PC-9 (cell line): ENCODE measurements at regions of chr1 and their contacts with region 1.

Region 1: GRCh38 chr1:1020000-1020404 is at the start of gene AGRN:
- DNase-seq: peak in 1 of 2 experiments; percentile 57
- H3K4me3 ChIP-seq: peak within 1 kb of the TSS; percentile 80
- H3K27ac ChIP-seq: peak within 1 kb of the TSS; percentile 76
- H3K4me1 ChIP-seq: peaks cover 32% of the 10 kb centered on the region
- H3K27me3 ChIP-seq: no peaks in the 10 kb centered on the region
- CTCF ChIP-seq: no peak
- total RNA-seq, gene AGRN: 278 and 381 TPM in 2 replicates

Region 2: GRCh38 chr1:1033009-1033587 is 13.1 kb after region 1 on chr1:
- CTCF ChIA-PET with region 1: no interaction called
- POLR2A ChIA-PET with region 1: no interaction called
- intact Hi-C with region 1: no loop called
- DNase-seq: no peak
- H3K4me3 ChIP-seq: no peak overlapping the region
- H3K27ac ChIP-seq: no peak overlapping the region
- H3K4me1 ChIP-seq: no peaks in the 10 kb centered on the region
- H3K27me3 ChIP-seq: no peaks in the 10 kb centered on the region
- CTCF ChIP-seq: peak; percentile 25; the same call in 1 of the 2 replicates

Region 3: GRCh38 chr1:1307908-1308755 is 288.1 kb after region 1 on chr1 and contains the starts of genes ACAP3 and PUSL1:
- CTCF ChIA-PET with region 1: no interaction called
- POLR2A ChIA-PET with region 1: no interaction called
- intact Hi-C with region 1: loop called (anchors 1 kb)
- DNase-seq: peak; percentile 72 to 89
- H3K4me3 ChIP-seq: peak within 1 kb of the TSS; percentile 84
- H3K27ac ChIP-seq: peak within 1 kb of the TSS; percentile 41
- H3K4me1 ChIP-seq: peaks cover 36% of the 10 kb centered on the region
- H3K27me3 ChIP-seq: no peaks in the 10 kb centered on the region
- CTCF ChIP-seq: no peak
- total RNA-seq, gene ACAP3: 53.5 and 54.8 TPM in 2 replicates
- total RNA-seq, gene PUSL1: 18.0 and 18.9 TPM in 2 replicates

Region 4: DNA sequence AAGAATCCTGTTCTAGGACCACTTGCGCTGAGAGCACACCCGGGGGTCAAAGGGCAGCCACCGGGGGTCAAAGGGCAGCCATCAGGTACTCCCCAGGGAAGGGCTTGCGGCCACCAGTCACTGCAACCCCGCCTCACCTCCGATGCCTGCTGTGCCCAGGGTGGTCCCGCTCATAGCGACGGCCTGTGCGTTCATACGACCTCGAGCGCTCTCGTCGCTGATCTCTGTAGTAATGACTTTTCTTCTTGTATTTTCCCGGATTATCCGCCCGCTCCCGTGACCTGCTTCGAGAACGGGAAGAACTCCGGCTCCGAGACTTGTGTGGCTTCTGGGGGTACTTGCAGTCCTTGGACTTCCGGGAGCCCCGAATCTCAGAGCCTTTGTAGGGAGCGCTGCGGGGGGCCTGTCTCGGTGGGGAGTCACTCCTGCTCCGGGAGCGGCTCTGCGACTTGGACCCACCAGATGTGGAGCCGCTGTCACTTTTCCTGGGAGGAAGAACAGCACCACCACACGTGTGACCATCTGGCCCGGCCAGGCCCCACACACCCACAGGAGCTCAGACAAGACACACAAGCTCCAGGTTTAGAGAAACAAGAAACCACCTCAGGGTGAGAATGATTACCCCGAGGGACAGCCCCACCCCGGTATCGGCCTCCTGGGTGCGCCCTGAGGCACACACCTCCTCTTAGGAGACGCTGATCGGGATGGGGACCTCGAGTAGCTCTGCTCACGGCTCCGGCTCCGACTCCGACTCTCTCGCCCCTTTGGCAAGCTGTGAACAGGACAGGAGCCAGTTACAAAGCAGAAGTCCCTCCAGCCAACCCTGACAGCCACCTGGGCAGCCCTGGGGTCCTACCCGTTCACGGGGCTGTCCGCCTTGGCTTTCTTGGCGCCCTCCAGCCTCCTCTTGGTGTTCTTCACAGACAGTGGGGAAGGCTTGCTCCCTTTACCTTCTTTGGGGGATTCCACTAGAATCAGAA is 367.4 kb after region 1 on chr1:
- CTCF ChIA-PET with region 1: no interaction called
- POLR2A ChIA-PET with region 1: no interaction called
- intact Hi-C with region 1: no loop called
- DNase-seq: no peak
- H3K4me3 ChIP-seq: no peak overlapping the region
- H3K27ac ChIP-seq: no peak overlapping the region
- H3K4me1 ChIP-seq: no peaks in the 10 kb centered on the region
- H3K27me3 ChIP-seq: no peaks in the 10 kb centered on the region
- CTCF ChIP-seq: no peak